Endothelial cell of umbilical vein (primary cell): ENCODE measurements at regions of chr16 and their contacts with region 1.

Region 1: GRCh38 chr16:21300309-21301167 is 22.4 kb upstream of the CRYM start:
- DNase-seq: peak; percentile 100
- H3K4me3 ChIP-seq: peak overlapping the region; percentile 61 to 65 (median 64)
- H3K27ac ChIP-seq: no peak overlapping the region
- H3K4me1 ChIP-seq: peaks cover 6% of the 10 kb centered on the region
- H3K27me3 ChIP-seq: peaks cover 2 to 12% of the 10 kb centered on the region in 2 experiments
- CTCF ChIP-seq: peak; percentile 80 to 95
- POLR2A ChIP-seq: no peak

Region 2: GRCh38 chr16:20799599-20799998 is 500.9 kb before region 1 on chr16:
- CTCF ChIA-PET with region 1: interaction called, 7 read pairs
- POLR2A ChIA-PET with region 1: no interaction called
- dilution Hi-C with region 1: no loop called
- intact Hi-C with region 1: loop called (anchors 1 kb)
- DNase-seq: peak; percentile 46
- H3K4me3 ChIP-seq: no peak overlapping the region
- H3K27ac ChIP-seq: no peak overlapping the region
- H3K4me1 ChIP-seq: peaks cover 8% of the 10 kb centered on the region
- H3K27me3 ChIP-seq: no peaks in the 10 kb centered on the region
- CTCF ChIP-seq: peak; percentile 20 to 33
- POLR2A ChIP-seq: no peak

Region 3: GRCh38 chr16:20900299-20901067 is 400.1 kb before region 1 on chr16 and contains the starts of genes DCUN1D3 and LYRM1:
- CTCF ChIA-PET with region 1: interaction called, 4 read pairs
- POLR2A ChIA-PET with region 1: no interaction called
- dilution Hi-C with region 1: no loop called
- intact Hi-C with region 1: loop called (anchors 5 kb)
- DNase-seq: peak; percentile 99
- H3K4me3 ChIP-seq: peak within 1 kb of the TSS; percentile 56 to 96 (median 83)
- H3K27ac ChIP-seq: peak within 1 kb of the TSS; percentile 100
- H3K4me1 ChIP-seq: peaks cover 58% of the 10 kb centered on the region
- H3K27me3 ChIP-seq: no peaks in the 10 kb centered on the region
- CTCF ChIP-seq: no peak
- POLR2A ChIP-seq: peak; percentile 78
- total RNA-seq, gene DCUN1D3: 35.0 and 39.6 TPM in 2 replicates
- total RNA-seq, gene LYRM1: 28.4 and 29.1 TPM in 2 replicates

Region 4: GRCh38 chr16:20987049-20987448 is 313.5 kb before region 1 on chr16:
- CTCF ChIA-PET with region 1: no interaction called
- POLR2A ChIA-PET with region 1: no interaction called
- dilution Hi-C with region 1: no loop called
- intact Hi-C with region 1: no loop called
- DNase-seq: no peak
- H3K4me3 ChIP-seq: no peak overlapping the region
- H3K27ac ChIP-seq: no peak overlapping the region
- H3K4me1 ChIP-seq: no peaks in the 10 kb centered on the region
- H3K27me3 ChIP-seq: no peaks in the 10 kb centered on the region
- CTCF ChIP-seq: no peak
- POLR2A ChIP-seq: no peak

Region 5: GRCh38 chr16:21184834-21185233 is 115.7 kb before region 1 on chr16:
- CTCF ChIA-PET with region 1: interaction called, 132 read pairs
- POLR2A ChIA-PET with region 1: no interaction called
- dilution Hi-C with region 1: no loop called
- intact Hi-C with region 1: loop called (anchors 1 kb)
- DNase-seq: no peak
- H3K4me3 ChIP-seq: no peak overlapping the region
- H3K27ac ChIP-seq: no peak overlapping the region
- H3K4me1 ChIP-seq: peaks cover 11% of the 10 kb centered on the region
- H3K27me3 ChIP-seq: no peaks in the 10 kb centered on the region
- CTCF ChIP-seq: no peak
- POLR2A ChIP-seq: no peak

Region 6: DNA sequence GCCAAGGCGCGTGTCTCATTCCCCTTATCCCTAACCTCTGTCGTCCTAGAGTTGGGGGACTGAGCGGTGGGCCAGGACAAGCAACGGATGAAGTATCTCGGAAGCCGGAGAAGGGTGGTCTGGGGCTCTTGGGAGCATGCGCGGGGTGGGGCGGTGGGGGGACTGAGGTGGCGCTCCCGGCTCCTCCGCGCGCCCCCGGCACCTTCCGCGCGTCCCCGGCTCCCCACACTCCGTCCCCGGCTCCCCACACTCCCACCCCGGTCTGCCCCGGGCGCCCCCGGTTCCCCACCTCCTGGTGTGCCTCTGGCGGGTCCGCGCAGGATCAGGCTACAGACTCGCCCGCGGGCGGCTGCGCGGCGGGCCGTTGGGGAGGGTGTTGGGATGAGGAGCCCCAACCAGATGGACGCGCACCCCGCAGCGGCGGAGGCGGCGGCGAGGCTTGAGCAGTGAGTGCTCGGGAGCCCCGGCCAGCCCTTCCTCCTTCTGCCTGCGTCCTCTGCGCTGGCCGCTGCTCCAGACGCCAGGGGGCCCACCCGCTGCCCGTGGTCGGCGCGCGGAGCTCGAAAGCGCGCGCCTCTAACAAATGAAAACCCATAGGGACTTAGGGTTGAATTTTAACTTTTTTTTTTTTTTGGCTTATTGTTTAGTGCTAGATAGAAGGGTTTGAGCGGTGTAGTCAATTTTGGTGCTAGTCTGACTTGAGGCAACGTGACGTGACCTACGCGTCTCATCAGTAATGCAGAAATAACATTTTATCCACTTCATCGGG is 16.8 kb before region 1 on chr16:
- CTCF ChIA-PET with region 1: interaction called, 19 read pairs
- POLR2A ChIA-PET with region 1: no interaction called
- dilution Hi-C with region 1: no loop called
- intact Hi-C with region 1: no loop called
- DNase-seq: peak; percentile 21
- H3K4me3 ChIP-seq: peak overlapping the region in 2 of 3 experiments; percentile 12 to 26
- H3K27ac ChIP-seq: no peak overlapping the region
- H3K4me1 ChIP-seq: no peaks in the 10 kb centered on the region
- H3K27me3 ChIP-seq: peaks cover 25 to 54% of the 10 kb centered on the region in 2 experiments
- CTCF ChIP-seq: peak; percentile 24 to 68
- POLR2A ChIP-seq: no peak